Naive thymus-derived CD4-positive, alpha-beta T cell (primary cell): ENCODE measurements at regions of chr1 and their contacts with region 1.

Region 1: GRCh38 chr1:84973498-84974334 is 23.2 kb downstream of the MCOLN2 start:
- DNase-seq: peak in 1 of 9 donors; percentile 49
- ATAC-seq: no peak
- H3K4me3 ChIP-seq: no peak overlapping the region
- H3K4me3 Mint-ChIP-seq: no peak overlapping the region
- H3K27ac ChIP-seq: no peak overlapping the region
- H3K27ac Mint-ChIP-seq: peak overlapping the region in 1 of 9 donors; percentile 72
- H3K4me1 ChIP-seq: peaks cover 0 to 23% of the 10 kb centered on the region in 2 donors
- H3K4me1 Mint-ChIP-seq: peaks cover 0 to 69% (median 0%) of the 10 kb centered on the region in 7 donors
- H3K27me3 ChIP-seq: no peaks in the 10 kb centered on the region
- H3K27me3 Mint-ChIP-seq: peaks cover 0 to 21% (median 0%) of the 10 kb centered on the region in 5 donors

Region 2: DNA sequence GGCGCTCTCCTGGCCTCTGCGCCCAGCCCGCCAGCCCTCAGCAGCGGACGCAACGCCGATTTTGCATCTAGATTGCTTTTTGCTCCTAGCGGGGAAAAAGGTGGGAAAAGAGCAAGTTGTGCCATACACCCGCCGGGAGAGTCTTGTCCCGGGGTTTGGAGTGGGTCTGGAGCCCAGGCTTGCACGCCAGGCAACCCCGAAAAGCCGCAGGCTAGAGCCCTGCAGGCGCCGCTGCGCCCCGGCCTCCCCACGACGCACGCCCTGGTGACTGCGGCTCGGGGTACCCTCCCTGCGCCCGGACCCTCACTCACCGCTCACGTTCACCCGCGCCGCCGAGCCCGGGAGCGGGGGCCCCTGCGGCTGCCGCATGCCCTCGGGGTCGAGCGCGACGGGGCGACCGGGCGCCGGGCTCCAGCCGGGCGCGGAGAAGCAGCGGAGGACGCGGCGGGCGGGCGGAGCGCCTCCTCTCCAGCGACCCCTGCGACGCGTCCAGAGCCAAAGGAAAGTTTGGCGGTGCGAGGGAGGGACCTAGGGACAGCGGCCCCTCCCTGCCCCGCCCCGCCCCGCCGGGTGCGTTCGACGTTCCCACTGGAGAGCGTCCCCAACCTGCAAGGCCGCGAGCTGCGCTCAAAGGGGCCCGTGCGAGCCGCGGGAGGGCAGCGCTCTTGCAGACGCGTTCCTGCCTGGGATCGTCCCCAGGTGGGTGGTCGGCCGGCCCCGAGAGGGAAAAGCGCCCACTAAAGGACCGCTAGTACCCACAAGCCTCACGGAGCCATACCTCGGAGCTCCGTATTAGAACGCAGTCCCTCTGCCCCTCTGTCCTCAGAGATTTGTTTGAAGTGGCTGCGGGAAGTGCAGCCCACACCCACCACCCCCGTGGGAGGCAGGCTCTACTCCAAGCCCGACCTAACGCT is 80.8 kb before region 1 on chr1 and contains the start of gene LPAR3:
- CTCF ChIA-PET with region 1: no interaction called
- POLR2A ChIA-PET with region 1: no interaction called
- intact Hi-C with region 1: no loop called
- DNase-seq: peak in 4 of 9 donors; percentile 11 to 25 (median 16)
- ATAC-seq: peak; percentile 57
- H3K4me3 ChIP-seq: peak within 1 kb of the TSS; percentile 54
- H3K4me3 Mint-ChIP-seq: peak within 1 kb of the TSS; percentile 66 to 86 (median 82)
- H3K27ac ChIP-seq: no peak within 1 kb of the TSS
- H3K27ac Mint-ChIP-seq: peak within 1 kb of the TSS in 1 of 9 donors; percentile 26
- H3K4me1 ChIP-seq: peaks cover 0 to 3% of the 10 kb centered on the region in 2 donors
- H3K4me1 Mint-ChIP-seq: peaks cover 13 to 37% (median 27%) of the 10 kb centered on the region in 7 donors
- H3K27me3 ChIP-seq: peaks cover 8% of the 10 kb centered on the region in 2 donors
- H3K27me3 Mint-ChIP-seq: peaks cover 26 to 57% (median 27%) of the 10 kb centered on the region in 5 donors
- total RNA-seq, gene LPAR3: 0.29 to 1.1 (median 0.97) TPM

Region 3: GRCh38 chr1:84959294-84959693 is 14.4 kb before region 1 on chr1:
- CTCF ChIA-PET with region 1: no interaction called
- POLR2A ChIA-PET with region 1: no interaction called
- intact Hi-C with region 1: loop called in 1 of 2 experiments (anchors 1 kb)
- DNase-seq: peak in 1 of 9 donors; percentile 42
- ATAC-seq: peak; percentile 46
- H3K4me3 ChIP-seq: no peak overlapping the region
- H3K4me3 Mint-ChIP-seq: peak overlapping the region in 1 of 10 donors; percentile 12
- H3K27ac ChIP-seq: no peak overlapping the region
- H3K27ac Mint-ChIP-seq: peak overlapping the region in 2 of 9 donors; percentile 10 to 23
- H3K4me1 ChIP-seq: no peaks in the 10 kb centered on the region
- H3K4me1 Mint-ChIP-seq: peaks cover 0 to 10% (median 0%) of the 10 kb centered on the region in 7 donors
- H3K27me3 ChIP-seq: no peaks in the 10 kb centered on the region
- H3K27me3 Mint-ChIP-seq: peaks cover 0 to 6% (median 3%) of the 10 kb centered on the region in 5 donors

Region 4: DNA sequence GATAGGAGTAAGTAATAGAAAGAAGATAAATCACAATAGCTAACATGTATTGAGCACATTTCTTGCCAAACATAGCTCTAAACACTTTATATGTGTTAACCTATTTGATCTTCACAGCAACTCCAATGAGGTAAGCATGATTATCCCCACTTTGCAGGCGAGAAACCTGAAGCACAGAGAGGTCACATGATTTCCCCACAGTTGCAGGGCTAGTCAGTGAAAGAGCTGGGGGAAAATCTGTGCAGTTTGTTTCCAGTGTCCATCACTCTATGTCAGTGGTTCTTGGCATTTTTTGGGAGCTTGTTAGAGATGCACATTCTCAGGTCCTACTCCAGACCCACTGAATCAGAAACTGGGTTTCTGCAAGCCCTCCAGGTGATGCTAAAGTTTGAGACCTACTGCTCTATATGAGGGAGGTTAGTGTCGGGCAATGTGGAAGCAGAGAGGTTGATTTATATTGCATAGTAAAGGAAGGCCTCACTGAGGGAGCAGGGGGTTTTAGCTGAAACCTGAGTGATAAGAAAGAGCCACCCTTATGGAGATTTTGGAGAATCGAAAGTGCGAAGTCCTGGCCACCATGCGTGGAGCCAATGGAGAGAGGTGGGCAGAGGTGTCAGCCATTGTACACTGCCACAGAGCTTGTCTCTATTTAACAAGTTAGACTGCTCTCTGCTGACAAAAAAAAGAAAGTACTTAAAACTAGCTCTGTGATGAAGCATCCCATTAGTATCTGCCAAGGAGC is 53.7 kb after region 1 on chr1:
- CTCF ChIA-PET with region 1: no interaction called
- POLR2A ChIA-PET with region 1: no interaction called
- intact Hi-C with region 1: loop called in 1 of 2 experiments (anchors 1 kb)
- DNase-seq: peak in 7 of 9 donors; percentile 12 to 56 (median 34)
- ATAC-seq: peak; percentile 94
- H3K4me3 ChIP-seq: peak overlapping the region; percentile 33
- H3K4me3 Mint-ChIP-seq: peak overlapping the region in 9 of 10 donors; percentile 19 to 70 (median 49)
- H3K27ac ChIP-seq: peak overlapping the region; percentile 5
- H3K27ac Mint-ChIP-seq: peak overlapping the region; percentile 43 to 91 (median 84)
- H3K4me1 ChIP-seq: peaks cover 0 to 7% of the 10 kb centered on the region in 2 donors
- H3K4me1 Mint-ChIP-seq: peaks cover 7 to 13% (median 10%) of the 10 kb centered on the region in 7 donors
- H3K27me3 ChIP-seq: no peaks in the 10 kb centered on the region
- H3K27me3 Mint-ChIP-seq: no peaks in the 10 kb centered on the region